Naive thymus-derived CD4-positive, alpha-beta T cell (primary cell): ENCODE measurements at regions of chr22 and their contacts with region 1.

Region 1: GRCh38 chr22:31509061-31509762 is 12.9 kb downstream of the SFI1 start:
- DNase-seq: no peak
- ATAC-seq: no peak
- H3K4me3 ChIP-seq: no peak overlapping the region
- H3K4me3 Mint-ChIP-seq: peak overlapping the region in 1 of 10 donors; percentile 13
- H3K27ac ChIP-seq: no peak overlapping the region
- H3K27ac Mint-ChIP-seq: peak overlapping the region in 7 of 9 donors; percentile 15 to 72 (median 33)
- H3K4me1 ChIP-seq: peaks cover 5 to 9% of the 10 kb centered on the region in 2 donors
- H3K4me1 Mint-ChIP-seq: peaks cover 13 to 62% (median 54%) of the 10 kb centered on the region in 7 donors
- H3K27me3 ChIP-seq: no peaks in the 10 kb centered on the region
- H3K27me3 Mint-ChIP-seq: no peaks in the 10 kb centered on the region

Region 2: GRCh38 chr22:31461699-31462098 is 47.5 kb before region 1 on chr22:
- CTCF ChIA-PET with region 1: no interaction called
- POLR2A ChIA-PET with region 1: no interaction called
- intact Hi-C with region 1: loop called in 1 of 2 experiments (anchors 2 kb)
- DNase-seq: no peak
- ATAC-seq: no peak
- H3K4me3 ChIP-seq: no peak overlapping the region
- H3K4me3 Mint-ChIP-seq: no peak overlapping the region
- H3K27ac ChIP-seq: no peak overlapping the region
- H3K27ac Mint-ChIP-seq: peak overlapping the region in 1 of 9 donors; percentile 42
- H3K4me1 ChIP-seq: no peaks in the 10 kb centered on the region
- H3K4me1 Mint-ChIP-seq: peaks cover 0 to 4% (median 0%) of the 10 kb centered on the region in 7 donors
- H3K27me3 ChIP-seq: no peaks in the 10 kb centered on the region
- H3K27me3 Mint-ChIP-seq: no peaks in the 10 kb centered on the region